IMR-90 (cell line): ENCODE measurements at regions of chr18 and their contacts with region 1.

Region 1: GRCh38 chr18:68847219-68847837 is 49.4 kb downstream of the CCDC102B start:
- DNase-seq: peak; percentile 63
- ATAC-seq: peak; percentile 84
- H3K4me3 ChIP-seq: no peak overlapping the region
- H3K27ac ChIP-seq: no peak overlapping the region
- H3K4me1 ChIP-seq: no peaks in the 10 kb centered on the region
- H3K27me3 ChIP-seq: no peaks in the 10 kb centered on the region
- CTCF ChIP-seq: peak; percentile 74
- POLR2A ChIP-seq: no peak
- RAD21 ChIP-seq: peak; percentile 64

Region 2: GRCh38 chr18:68532328-68532885 is 314.9 kb before region 1 on chr18:
- CTCF ChIA-PET with region 1: no interaction called
- POLR2A ChIA-PET with region 1: no interaction called
- dilution Hi-C with region 1: no loop called
- in situ Hi-C with region 1: no loop called
- intact Hi-C with region 1: no loop called
- DNase-seq: no peak
- ATAC-seq: no peak
- H3K4me3 ChIP-seq: no peak overlapping the region
- H3K27ac ChIP-seq: no peak overlapping the region
- H3K4me1 ChIP-seq: peaks cover 2% of the 10 kb centered on the region; the same call in 1 of the 2 replicates
- H3K27me3 ChIP-seq: no peaks in the 10 kb centered on the region
- CTCF ChIP-seq: no peak
- POLR2A ChIP-seq: no peak
- RAD21 ChIP-seq: no peak

Region 3: DNA sequence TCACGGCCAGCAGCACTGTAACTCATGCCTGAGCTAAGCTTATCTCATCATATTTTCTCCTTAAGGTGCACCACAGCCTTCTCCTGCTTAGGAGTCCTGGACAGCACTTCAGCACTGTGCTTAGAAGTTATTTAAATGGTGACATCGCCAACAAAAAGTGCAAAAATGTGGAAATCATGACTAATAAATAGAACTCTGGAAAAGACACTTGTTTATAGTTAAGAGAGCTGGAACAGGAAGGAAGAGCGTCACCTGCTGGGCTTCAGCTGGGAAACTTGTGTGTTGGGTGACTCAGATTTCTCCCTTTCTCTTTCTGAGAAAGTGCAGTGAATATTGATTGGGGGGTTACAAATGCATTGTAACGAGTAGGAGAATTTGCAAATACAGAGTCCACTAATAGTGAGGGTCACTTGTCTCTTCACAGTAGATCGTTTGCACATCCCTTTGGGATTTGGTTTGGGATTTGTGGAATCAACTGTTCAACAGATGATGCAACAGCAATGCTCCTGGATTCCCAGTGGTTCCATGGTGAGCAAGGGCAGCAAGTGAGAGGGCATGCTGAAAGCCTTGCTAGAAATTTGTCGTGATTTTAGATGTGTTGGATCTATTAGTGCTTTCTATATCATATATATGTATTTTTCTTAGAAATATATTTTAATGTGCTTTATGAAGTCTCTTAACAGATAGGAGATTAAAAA is 637.5 kb after region 1 on chr18:
- CTCF ChIA-PET with region 1: no interaction called
- POLR2A ChIA-PET with region 1: no interaction called
- dilution Hi-C with region 1: no loop called
- in situ Hi-C with region 1: no loop called
- intact Hi-C with region 1: loop called (anchors 10 kb)
- DNase-seq: peak; percentile 81
- ATAC-seq: peak; percentile 62
- H3K4me3 ChIP-seq: no peak overlapping the region
- H3K27ac ChIP-seq: no peak overlapping the region
- H3K4me1 ChIP-seq: peaks cover 3% of the 10 kb centered on the region
- H3K27me3 ChIP-seq: no peaks in the 10 kb centered on the region
- CTCF ChIP-seq: peak; percentile 54
- POLR2A ChIP-seq: no peak
- RAD21 ChIP-seq: peak; percentile 51

Region 4: DNA sequence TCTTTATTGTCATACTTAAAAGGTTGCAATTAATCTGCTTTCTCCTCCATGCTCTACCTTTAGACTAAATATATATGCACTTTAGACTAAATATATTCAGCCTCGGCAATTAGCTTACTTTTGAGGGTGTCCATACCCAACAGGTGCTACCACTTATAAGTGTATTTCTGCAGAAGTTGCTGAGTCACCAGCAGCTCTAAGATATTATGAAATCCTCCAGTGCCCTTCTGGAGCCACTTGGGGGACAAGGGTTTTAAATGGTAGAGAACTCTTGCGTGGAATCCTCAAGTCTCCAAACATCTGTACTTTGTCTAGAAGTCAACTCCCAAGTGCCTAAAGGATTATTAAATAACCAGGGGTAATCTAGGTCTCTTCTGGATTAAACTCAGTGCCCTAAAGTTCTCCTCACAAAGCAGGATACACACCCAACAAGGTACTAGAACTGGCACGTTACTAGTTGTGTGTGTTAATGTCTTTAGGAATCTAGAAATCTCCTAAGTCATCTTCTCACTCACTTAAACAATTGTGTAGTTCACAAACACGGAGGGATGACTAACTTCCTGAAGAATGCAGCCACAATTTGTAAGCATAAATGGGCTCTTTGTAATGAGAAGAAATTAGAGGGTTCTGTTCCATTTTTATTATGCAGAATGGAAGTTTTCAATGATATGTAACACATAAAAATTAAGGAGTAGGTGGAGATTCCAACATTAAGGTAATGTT is 940.7 kb after region 1 on chr18:
- CTCF ChIA-PET with region 1: no interaction called
- POLR2A ChIA-PET with region 1: no interaction called
- dilution Hi-C with region 1: no loop called
- in situ Hi-C with region 1: no loop called
- intact Hi-C with region 1: loop called (anchors 10 kb)
- DNase-seq: peak; percentile 83
- ATAC-seq: peak; percentile 93
- H3K4me3 ChIP-seq: no peak overlapping the region
- H3K27ac ChIP-seq: peak overlapping the region; percentile 56; the same call in 1 of the 2 replicates
- H3K4me1 ChIP-seq: peaks cover 7% of the 10 kb centered on the region; the same call in 1 of the 2 replicates
- H3K27me3 ChIP-seq: no peaks in the 10 kb centered on the region
- CTCF ChIP-seq: no peak
- POLR2A ChIP-seq: no peak
- RAD21 ChIP-seq: no peak

Region 5: GRCh38 chr18:70082430-70082829 is 1235.1 kb after region 1 on chr18:
- CTCF ChIA-PET with region 1: interaction called, 3 read pairs
- POLR2A ChIA-PET with region 1: no interaction called
- dilution Hi-C with region 1: no loop called
- in situ Hi-C with region 1: no loop called
- intact Hi-C with region 1: loop called (anchors 2 kb)
- DNase-seq: no peak
- ATAC-seq: no peak
- H3K4me3 ChIP-seq: no peak overlapping the region
- H3K27ac ChIP-seq: no peak overlapping the region
- H3K4me1 ChIP-seq: peaks cover 1% of the 10 kb centered on the region; the same call in 1 of the 2 replicates
- H3K27me3 ChIP-seq: no peaks in the 10 kb centered on the region
- CTCF ChIP-seq: no peak
- POLR2A ChIP-seq: no peak
- RAD21 ChIP-seq: no peak

Region 6: DNA sequence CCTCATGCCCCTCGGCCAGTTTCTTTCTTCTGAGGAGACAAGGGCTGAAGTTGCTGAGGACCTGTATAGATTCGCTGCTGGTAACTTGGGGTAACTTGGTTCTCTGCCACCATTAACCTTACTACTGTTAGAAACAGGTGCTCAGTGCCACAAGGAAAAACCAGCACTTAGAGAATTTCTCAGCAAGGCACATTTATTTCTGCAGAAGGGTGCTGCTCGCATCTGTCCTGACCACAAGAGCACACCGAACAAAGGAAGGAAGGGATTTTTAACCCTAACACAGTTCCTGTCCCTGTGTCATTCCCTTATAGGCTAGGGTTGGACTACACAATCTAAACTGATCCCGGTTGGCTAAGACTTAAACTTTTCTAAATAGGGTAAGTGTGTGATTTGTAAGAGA is 1595.6 kb after region 1 on chr18:
- CTCF ChIA-PET with region 1: no interaction called
- POLR2A ChIA-PET with region 1: no interaction called
- dilution Hi-C with region 1: no loop called
- in situ Hi-C with region 1: loop called (anchors 10 kb)
- intact Hi-C with region 1: no loop called
- DNase-seq: no peak
- ATAC-seq: no peak
- H3K4me3 ChIP-seq: no peak overlapping the region
- H3K27ac ChIP-seq: no peak overlapping the region
- H3K4me1 ChIP-seq: no peaks in the 10 kb centered on the region
- H3K27me3 ChIP-seq: no peaks in the 10 kb centered on the region
- CTCF ChIP-seq: no peak
- POLR2A ChIP-seq: no peak
- RAD21 ChIP-seq: no peak